IMR-90 (cell line): ENCODE measurements at regions of chr14 and their contacts with region 1.

Region 1: DNA sequence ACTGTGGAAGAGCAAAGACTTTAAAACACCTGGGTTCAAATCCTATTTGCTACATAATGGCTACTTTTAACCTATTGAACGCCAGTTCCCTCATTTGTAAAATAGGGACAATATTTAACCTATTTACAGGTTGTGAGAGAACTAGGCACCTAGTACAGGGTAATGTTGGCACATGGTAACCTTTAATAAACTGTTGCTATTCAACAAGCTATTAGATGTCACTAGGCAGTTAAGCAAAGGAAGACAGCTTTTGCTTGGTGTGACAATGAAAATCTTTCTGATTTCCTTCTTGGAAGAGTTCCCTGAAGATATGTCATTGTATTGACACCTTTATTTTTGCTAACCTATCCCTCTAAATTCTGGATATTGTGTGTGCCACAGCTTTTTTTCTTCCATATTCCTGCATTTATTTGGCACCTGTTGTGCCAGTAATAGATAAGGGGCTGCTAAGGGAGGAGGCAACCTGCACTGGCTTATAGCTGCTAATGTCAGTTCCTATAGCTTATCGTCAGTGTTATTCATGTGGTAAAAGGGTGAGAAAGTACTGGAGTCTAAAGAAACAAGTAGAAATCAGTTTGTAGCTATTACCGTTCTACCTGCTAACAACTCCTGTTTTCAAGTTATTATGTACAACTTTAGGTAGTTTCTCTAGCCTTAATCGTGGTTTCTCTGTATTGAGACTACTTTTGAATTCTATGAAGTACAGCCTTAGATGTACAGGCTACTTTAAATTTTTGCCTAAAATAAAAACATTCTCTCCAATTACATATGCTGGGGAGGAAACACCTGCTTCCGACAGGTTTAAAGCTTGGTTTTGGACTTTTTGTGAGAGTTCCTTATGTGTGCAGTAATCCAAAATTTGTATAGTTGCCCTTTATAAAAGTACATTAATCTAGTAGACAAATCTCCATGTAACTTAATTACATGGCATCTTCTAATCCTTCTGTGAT is 24.3 kb downstream of the HIF1A start:
- DNase-seq: no peak
- ATAC-seq: no peak
- H3K4me3 ChIP-seq: no peak overlapping the region
- H3K27ac ChIP-seq: no peak overlapping the region
- H3K4me1 ChIP-seq: peaks cover 17% of the 10 kb centered on the region
- H3K27me3 ChIP-seq: no peaks in the 10 kb centered on the region
- CTCF ChIP-seq: no peak
- POLR2A ChIP-seq: no peak
- RAD21 ChIP-seq: no peak

Region 2: GRCh38 chr14:61797309-61797708 is 77.7 kb after region 1 on chr14:
- CTCF ChIA-PET with region 1: no interaction called
- POLR2A ChIA-PET with region 1: no interaction called
- dilution Hi-C with region 1: no loop called
- in situ Hi-C with region 1: no loop called
- intact Hi-C with region 1: loop called (anchors 5 kb)
- DNase-seq: no peak
- ATAC-seq: no peak
- H3K4me3 ChIP-seq: no peak overlapping the region
- H3K27ac ChIP-seq: no peak overlapping the region
- H3K4me1 ChIP-seq: no peaks in the 10 kb centered on the region
- H3K27me3 ChIP-seq: no peaks in the 10 kb centered on the region
- CTCF ChIP-seq: no peak
- POLR2A ChIP-seq: no peak
- RAD21 ChIP-seq: no peak